Natural killer cell (primary cell): ENCODE measurements at regions of chr14 and their contacts with region 1.

Region 1: DNA sequence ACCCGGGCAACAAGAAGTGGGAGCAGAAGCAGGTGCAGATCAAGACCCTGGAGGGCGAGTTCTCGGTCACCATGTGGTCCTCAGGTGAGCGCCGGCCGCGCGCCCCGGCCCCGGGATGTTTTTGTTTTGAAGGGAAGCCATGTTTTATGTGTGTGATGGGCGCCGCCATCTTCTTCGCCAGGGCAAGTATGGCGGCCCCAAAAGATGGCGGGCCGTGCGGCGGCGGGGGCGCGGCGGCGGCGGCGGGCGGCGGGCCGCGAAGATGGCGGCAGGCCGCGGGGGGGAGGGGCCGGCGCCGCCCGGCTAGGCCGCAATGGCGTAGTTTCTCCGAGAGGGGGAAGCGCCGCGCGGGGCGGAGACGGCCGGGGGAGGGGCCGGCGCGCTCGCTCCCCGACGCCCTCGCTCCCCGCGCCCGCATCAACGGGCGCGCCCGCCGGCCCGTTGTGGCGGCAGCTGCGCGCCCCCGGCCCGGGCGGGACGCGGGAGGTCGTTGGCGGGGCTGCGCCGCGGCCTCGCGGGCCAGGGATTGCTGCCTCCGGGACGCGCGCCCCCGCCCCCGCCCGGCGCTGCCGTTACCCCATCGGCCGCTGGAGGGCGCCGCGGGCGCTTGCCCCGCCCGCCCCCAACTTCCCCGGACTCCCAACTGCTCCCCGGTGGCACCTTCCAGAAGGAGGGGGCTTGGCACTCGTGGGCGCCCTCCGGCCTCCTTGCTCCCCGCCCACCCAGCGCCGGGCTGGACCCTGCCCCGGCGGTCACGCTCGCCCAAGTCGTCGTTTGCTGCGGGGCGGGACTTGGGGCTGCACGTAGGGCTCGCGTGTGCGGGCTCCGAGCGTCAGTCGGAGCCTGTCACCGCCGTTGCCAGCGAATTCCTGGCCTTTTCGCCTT is 1.1 kb downstream of the YY1 start:
- DNase-seq: peak; percentile 80 to 92
- ATAC-seq: peak; percentile 37 to 63 (median 48)
- H3K4me3 ChIP-seq: peak overlapping the region; percentile 84
- H3K4me3 Mint-ChIP-seq: peak overlapping the region; percentile 93
- H3K27ac ChIP-seq: peak overlapping the region; percentile 90
- H3K27ac Mint-ChIP-seq: peak overlapping the region; percentile 94 to 97
- H3K4me1 ChIP-seq: peaks cover 31% of the 10 kb centered on the region
- H3K4me1 Mint-ChIP-seq: peaks cover 38 to 61% of the 10 kb centered on the region in 2 donors
- H3K27me3 ChIP-seq: no peaks in the 10 kb centered on the region
- H3K27me3 Mint-ChIP-seq: no peaks in the 10 kb centered on the region
- CTCF ChIP-seq: peak; percentile 66

Region 2: GRCh38 chr14:99758121-99758821 is 481.8 kb before region 1 on chr14:
- intact Hi-C with region 1: no loop called
- DNase-seq: no peak
- ATAC-seq: no peak
- H3K4me3 ChIP-seq: no peak overlapping the region
- H3K4me3 Mint-ChIP-seq: no peak overlapping the region
- H3K27ac ChIP-seq: no peak overlapping the region
- H3K27ac Mint-ChIP-seq: no peak overlapping the region
- H3K4me1 ChIP-seq: no peaks in the 10 kb centered on the region
- H3K4me1 Mint-ChIP-seq: peaks cover 5 to 6% of the 10 kb centered on the region in 2 donors
- H3K27me3 ChIP-seq: no peaks in the 10 kb centered on the region
- H3K27me3 Mint-ChIP-seq: peaks cover 6 to 10% of the 10 kb centered on the region in 2 donors
- CTCF ChIP-seq: no peak

Region 3: DNA sequence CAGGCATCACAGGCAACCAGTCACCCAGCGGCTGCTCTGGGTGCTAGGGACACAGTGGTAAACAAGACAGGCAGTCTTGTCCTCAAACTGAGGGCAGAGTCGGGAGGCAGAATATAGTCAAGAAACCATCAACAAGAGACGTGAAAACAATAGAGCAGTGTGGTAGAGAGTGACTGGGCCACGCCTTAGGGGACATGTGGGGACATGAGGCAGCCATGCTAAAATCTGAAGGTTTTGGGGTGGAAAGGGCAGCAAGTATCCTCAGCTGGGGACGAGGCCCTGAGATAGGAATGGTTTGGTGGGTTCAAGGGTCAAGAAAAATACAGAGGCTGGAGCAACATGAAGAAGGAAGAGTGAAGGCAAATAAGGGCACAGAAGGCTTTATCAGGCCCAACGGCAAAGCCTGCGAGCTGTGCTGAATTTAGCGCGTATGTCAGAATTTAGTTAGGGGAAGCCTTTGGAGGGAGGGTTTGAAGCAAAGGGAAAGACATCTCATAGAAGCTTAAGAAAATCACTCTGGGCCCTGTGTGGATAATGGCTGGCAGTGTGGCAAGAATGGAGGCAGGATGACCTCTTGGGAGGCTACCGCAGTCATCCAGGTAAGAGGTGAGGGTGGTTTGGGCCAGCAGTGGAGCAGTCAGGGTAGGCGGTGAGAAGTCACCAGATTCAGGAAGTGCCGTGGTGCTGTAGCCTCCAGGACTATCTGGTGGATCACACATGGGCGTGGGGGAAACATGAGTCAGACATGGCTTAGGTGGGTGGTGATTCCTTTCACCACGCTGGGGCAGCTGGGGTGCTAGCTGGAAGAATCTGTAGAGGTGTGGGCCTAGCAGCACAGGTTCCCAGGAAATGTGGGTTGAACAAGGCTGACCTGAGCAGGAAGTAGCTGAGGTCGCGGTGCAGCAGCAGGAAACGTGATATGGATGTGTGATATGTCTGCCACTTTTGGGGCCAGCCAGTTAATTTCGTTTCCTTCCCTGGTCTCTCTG is 171.8 kb before region 1 on chr14:
- intact Hi-C with region 1: loop called (anchors 5 kb)
- DNase-seq: peak; percentile 85 to 96
- ATAC-seq: peak; percentile 53 to 76 (median 65)
- H3K4me3 ChIP-seq: peak overlapping the region; percentile 78
- H3K4me3 Mint-ChIP-seq: peak overlapping the region; percentile 90
- H3K27ac ChIP-seq: peak overlapping the region; percentile 89
- H3K27ac Mint-ChIP-seq: peak overlapping the region; percentile 93
- H3K4me1 ChIP-seq: peaks cover 76% of the 10 kb centered on the region
- H3K4me1 Mint-ChIP-seq: peaks cover 92 to 95% of the 10 kb centered on the region in 2 donors
- H3K27me3 ChIP-seq: no peaks in the 10 kb centered on the region
- H3K27me3 Mint-ChIP-seq: no peaks in the 10 kb centered on the region
- CTCF ChIP-seq: no peak

Region 4: GRCh38 chr14:100173353-100173752 is 66.7 kb before region 1 on chr14:
- intact Hi-C with region 1: no loop called
- DNase-seq: no peak
- ATAC-seq: no peak
- H3K4me3 ChIP-seq: no peak overlapping the region
- H3K4me3 Mint-ChIP-seq: no peak overlapping the region
- H3K27ac ChIP-seq: no peak overlapping the region
- H3K27ac Mint-ChIP-seq: no peak overlapping the region
- H3K4me1 ChIP-seq: peaks cover 9% of the 10 kb centered on the region
- H3K4me1 Mint-ChIP-seq: peaks cover 5 to 24% of the 10 kb centered on the region in 2 donors
- H3K27me3 ChIP-seq: no peaks in the 10 kb centered on the region
- H3K27me3 Mint-ChIP-seq: peaks cover 0 to 3% of the 10 kb centered on the region in 2 donors
- CTCF ChIP-seq: no peak

Region 5: DNA sequence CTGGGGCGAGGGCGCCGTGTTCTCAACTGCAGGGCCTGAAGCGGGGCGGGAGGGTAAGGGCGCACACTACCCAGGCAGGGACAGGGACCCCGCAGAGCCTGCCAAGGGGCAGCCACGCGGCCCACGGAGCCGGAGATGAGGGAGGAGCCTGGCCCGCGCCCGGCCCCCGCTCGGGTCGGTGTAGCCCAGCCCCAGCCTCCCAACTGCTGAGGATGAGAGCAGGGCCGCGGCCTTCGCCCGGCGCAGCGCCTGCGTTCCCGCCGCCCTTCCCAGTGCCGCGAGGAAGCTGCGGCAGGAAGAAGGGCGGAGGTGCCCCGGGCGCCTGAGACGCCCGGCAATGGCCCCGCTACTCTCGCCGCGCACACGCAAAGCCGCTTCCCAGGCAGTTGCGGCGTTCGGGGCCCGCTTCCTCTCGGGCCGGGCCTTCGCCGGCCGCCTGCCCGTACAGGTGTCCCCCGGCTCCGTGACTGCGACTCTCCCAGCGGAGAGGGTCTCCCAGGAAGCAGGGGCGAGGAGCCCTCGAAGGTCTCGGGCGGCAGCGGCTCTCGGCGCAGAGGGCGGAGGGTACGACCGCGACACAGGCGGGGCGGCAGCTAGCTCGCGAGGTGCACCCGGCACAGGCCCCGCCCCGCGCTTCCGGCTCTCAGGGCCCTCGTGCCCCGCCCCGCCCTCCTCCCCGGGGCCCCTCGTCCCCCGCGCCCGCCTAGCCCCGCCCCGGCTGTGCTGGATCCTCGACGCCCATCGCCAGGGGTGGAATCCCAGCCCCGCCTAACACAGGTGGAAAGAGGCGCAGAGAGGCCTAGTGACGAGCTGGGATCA is 25.9 kb before region 1 on chr14:
- intact Hi-C with region 1: loop called (anchors 2 kb)
- DNase-seq: peak; percentile 84 to 95
- ATAC-seq: peak; percentile 96 to 99 (median 96)
- H3K4me3 ChIP-seq: peak overlapping the region; percentile 76
- H3K4me3 Mint-ChIP-seq: peak overlapping the region; percentile 87
- H3K27ac ChIP-seq: peak overlapping the region; percentile 83
- H3K27ac Mint-ChIP-seq: peak overlapping the region; percentile 80
- H3K4me1 ChIP-seq: peaks cover 19% of the 10 kb centered on the region
- H3K4me1 Mint-ChIP-seq: peaks cover 18 to 29% of the 10 kb centered on the region in 2 donors
- H3K27me3 ChIP-seq: no peaks in the 10 kb centered on the region
- H3K27me3 Mint-ChIP-seq: no peaks in the 10 kb centered on the region
- CTCF ChIP-seq: no peak

Region 6: GRCh38 chr14:100221533-100222223 is 18.4 kb before region 1 on chr14:
- intact Hi-C with region 1: loop called (anchors 2 kb)
- DNase-seq: peak; percentile 41 to 86
- ATAC-seq: peak; percentile 90 to 96 (median 96)
- H3K4me3 ChIP-seq: peak overlapping the region; percentile 58
- H3K4me3 Mint-ChIP-seq: no peak overlapping the region
- H3K27ac ChIP-seq: peak overlapping the region; percentile 74
- H3K27ac Mint-ChIP-seq: no peak overlapping the region
- H3K4me1 ChIP-seq: peaks cover 38% of the 10 kb centered on the region
- H3K4me1 Mint-ChIP-seq: peaks cover 4 to 13% of the 10 kb centered on the region in 2 donors
- H3K27me3 ChIP-seq: no peaks in the 10 kb centered on the region
- H3K27me3 Mint-ChIP-seq: no peaks in the 10 kb centered on the region
- CTCF ChIP-seq: no peak

Region 7: GRCh38 chr14:100271247-100271939 is 31.3 kb after region 1 on chr14:
- intact Hi-C with region 1: no loop called
- DNase-seq: peak in 1 of 2 donors; percentile 58
- ATAC-seq: peak in 1 of 3 donors; percentile 36
- H3K4me3 ChIP-seq: no peak overlapping the region
- H3K4me3 Mint-ChIP-seq: no peak overlapping the region
- H3K27ac ChIP-seq: no peak overlapping the region
- H3K27ac Mint-ChIP-seq: no peak overlapping the region
- H3K4me1 ChIP-seq: peaks cover 4% of the 10 kb centered on the region
- H3K4me1 Mint-ChIP-seq: peaks cover 47 to 55% of the 10 kb centered on the region in 2 donors
- H3K27me3 ChIP-seq: no peaks in the 10 kb centered on the region
- H3K27me3 Mint-ChIP-seq: no peaks in the 10 kb centered on the region
- CTCF ChIP-seq: peak; percentile 23

Region 8: DNA sequence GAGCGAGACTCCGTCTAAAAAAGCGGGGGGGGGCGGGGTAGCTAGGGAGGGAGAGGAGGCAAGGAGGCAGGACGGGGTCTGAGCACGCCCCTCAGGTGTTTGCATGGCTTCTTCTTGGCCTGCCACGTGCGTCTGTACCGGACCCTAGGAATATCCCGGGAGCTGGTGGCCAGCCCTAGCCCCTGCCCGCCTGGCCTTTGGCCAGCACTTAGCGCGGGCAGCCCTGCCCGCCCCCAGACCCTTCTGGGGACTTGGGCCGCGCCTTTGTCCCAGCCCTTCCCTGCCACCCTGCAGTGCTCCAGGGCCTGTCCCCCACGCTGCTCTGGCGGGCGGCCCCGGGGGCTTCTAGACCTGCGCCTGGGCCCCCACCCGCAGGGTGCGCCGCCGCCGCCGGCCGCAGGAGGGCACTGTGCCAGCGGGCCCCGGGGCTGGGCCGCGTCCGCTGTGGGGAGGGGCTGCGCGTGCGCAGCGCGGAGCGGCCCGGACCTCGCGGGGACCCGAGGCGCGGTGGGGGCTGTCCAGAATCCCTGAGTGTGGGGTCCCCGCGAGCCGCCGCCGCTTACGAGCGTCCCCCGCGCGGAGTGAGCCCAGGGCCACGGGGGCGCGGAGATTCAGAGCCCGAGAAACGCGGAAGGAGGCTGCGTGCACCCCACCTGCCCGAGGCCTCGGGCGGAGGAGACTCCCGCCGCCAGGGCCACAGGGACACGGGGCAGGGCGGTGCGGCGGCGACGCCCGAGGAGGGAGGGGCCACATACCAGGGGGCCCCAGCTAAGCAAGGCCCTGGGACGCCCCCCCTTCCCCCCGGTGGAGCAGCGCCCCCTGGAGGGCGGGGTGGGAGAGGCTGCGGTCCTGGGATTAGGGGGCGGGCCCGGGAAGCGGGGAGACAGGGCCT is 45.2 kb after region 1 on chr14:
- intact Hi-C with region 1: loop called (anchors 5 kb)
- DNase-seq: peak; percentile 83 to 90
- ATAC-seq: peak; percentile 93 to 96 (median 95)
- H3K4me3 ChIP-seq: peak overlapping the region; percentile 68
- H3K4me3 Mint-ChIP-seq: peak overlapping the region; percentile 47
- H3K27ac ChIP-seq: peak overlapping the region; percentile 73
- H3K27ac Mint-ChIP-seq: peak overlapping the region; percentile 53 to 83
- H3K4me1 ChIP-seq: peaks cover 14% of the 10 kb centered on the region
- H3K4me1 Mint-ChIP-seq: peaks cover 5 to 6% of the 10 kb centered on the region in 2 donors
- H3K27me3 ChIP-seq: no peaks in the 10 kb centered on the region
- H3K27me3 Mint-ChIP-seq: no peaks in the 10 kb centered on the region
- CTCF ChIP-seq: peak; percentile 95